ENCODE measurements at regions of chr3 and their contacts with region 1.

Region 1: GRCh38 chr3:46705022-46705530 is 3.9 kb downstream of the TMIE start:
- DNase-seq: peak; percentile 68 to 86
- ATAC-seq: peak; percentile 80 to 87 (median 84)
- H3K4me3 ChIP-seq: no peak overlapping the region
- H3K27ac ChIP-seq: no peak overlapping the region
- H3K4me1 ChIP-seq: peaks cover 35% of the 10 kb centered on the region
- H3K27me3 ChIP-seq: no peaks in the 10 kb centered on the region
- CTCF ChIP-seq: peak; percentile 98

Region 2: GRCh38 chr3:46866720-46867549 is 161.9 kb after region 1 on chr3:
- intact Hi-C with region 1: loop called in 1 of 2 experiments (anchors 10 kb)
- DNase-seq: peak; percentile 86 to 93
- ATAC-seq: peak; percentile 35 to 55 (median 48)
- H3K4me3 ChIP-seq: peak overlapping the region; percentile 9
- H3K27ac ChIP-seq: peak overlapping the region; percentile 59
- H3K4me1 ChIP-seq: peaks cover 18% of the 10 kb centered on the region
- H3K27me3 ChIP-seq: no peaks in the 10 kb centered on the region
- CTCF ChIP-seq: peak; percentile 76

Region 3: DNA sequence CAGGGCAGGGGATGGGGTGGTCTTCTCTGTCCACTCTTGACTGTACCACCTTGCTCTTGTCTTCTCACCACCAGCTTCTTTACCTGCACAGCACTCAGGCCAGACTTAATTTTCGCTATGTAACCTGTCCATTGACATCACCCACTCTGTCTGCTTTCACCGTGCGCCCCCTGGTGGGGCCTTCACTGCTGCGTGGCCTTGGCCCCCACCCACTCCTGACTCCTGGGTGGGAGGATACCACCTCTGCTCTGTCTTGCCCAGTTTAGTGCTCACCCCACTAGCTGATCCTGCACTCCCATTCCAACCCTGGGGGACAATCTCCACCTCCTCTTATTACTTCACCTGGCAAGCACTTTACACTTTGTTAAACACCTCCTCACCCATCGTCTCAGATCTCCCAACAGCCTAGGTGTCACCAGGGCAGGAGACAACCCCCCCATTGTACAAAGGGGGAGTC is 190.2 kb after region 1 on chr3:
- intact Hi-C with region 1: loop called (anchors 2 to 5 kb)
- DNase-seq: peak; percentile 78 to 85
- ATAC-seq: peak; percentile 41 to 57 (median 50)
- H3K4me3 ChIP-seq: no peak overlapping the region
- H3K27ac ChIP-seq: no peak overlapping the region
- H3K4me1 ChIP-seq: no peaks in the 10 kb centered on the region
- H3K27me3 ChIP-seq: peaks cover 0 to 2% (median 0%) of the 10 kb centered on the region in 3 donors
- CTCF ChIP-seq: peak; percentile 80

Region 4: DNA sequence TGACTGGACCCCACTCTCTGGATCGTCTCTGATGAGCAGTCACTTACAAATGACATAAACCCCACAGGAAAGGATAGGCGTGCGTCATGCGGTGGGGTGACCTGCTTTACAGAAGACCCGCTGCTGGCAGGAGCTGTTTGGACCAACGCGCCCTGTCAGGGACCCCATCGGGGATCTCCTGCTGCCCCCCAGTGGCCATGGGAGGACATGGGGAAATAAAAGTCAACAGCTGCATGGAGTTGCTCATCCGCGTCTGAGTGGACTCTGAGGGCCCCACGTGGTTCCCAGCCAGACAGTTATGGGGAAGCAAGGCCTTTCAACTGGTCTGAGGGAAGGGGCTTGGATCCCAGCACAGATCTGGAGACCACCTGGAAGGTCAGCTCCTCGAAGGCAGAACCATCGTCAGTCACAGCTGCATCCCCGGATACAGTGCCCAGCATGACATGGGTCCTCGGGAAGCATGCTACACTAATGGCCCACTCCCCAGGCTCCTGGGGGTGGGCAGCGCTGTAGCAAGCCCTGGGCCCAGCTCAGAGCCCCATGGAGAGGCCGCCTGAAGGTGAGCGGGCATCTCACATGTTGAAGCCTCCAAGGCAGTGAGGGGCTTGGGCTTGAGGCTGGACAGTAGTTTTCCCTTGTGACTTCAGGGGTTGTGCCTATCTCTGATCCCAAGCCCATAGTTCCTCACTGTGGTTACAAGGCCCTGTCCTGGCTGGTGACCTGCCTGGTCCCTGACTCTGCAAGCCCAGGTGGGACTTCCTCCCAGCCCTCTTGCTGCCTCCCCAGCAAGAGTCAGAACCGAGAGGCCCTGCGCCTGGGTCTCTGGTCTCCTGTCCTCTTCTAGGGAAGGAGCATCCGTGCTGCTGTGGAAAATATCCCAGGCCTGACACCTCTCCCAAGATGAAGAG is 204.7 kb after region 1 on chr3:
- intact Hi-C with region 1: loop called (anchors 1 to 5 kb)
- DNase-seq: peak; percentile 89 to 93
- ATAC-seq: peak; percentile 87 to 93 (median 90)
- H3K4me3 ChIP-seq: no peak overlapping the region
- H3K27ac ChIP-seq: no peak overlapping the region
- H3K4me1 ChIP-seq: peaks cover 22% of the 10 kb centered on the region
- H3K27me3 ChIP-seq: no peaks in the 10 kb centered on the region
- CTCF ChIP-seq: peak; percentile 88

Region 5: DNA sequence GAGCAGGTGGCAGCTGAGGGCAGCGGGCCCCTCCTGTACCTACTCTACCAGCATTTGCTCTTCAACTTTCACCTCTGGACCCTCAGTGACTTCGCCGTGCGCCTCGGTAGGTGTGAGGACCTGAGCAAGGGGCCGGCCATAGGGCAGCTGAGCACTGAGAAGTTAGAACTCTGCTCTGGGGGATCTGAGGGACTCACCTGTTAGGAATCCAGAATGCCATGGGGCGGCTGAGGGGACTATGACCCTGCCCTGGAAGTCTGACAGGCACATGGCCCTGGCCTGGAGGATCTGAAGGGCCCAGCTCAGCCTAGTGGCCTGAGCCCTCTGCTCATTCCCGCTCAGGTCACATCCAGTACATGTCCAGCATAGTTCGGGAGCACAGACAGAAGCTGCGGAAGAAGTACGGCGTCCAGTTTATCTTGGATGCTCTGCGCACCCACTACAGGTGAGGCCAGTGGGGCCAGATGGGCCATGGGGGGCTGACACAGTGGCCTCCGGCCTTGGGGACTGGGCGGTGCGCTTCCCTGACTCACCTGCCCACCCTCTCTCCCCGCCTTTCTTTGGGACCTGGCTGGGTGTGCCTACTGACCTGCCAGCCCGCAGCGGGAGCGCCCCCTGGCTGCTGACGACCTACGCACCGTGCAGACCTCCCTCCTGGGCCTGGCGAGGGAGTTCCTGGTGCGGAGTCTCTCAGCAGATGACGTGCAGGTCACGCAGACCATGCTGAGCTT is 293.2 kb after region 1 on chr3:
- intact Hi-C with region 1: loop called (anchors 2 to 10 kb)
- DNase-seq: peak; percentile 77 to 90
- ATAC-seq: peak; percentile 83 to 95 (median 85)
- H3K4me3 ChIP-seq: no peak overlapping the region
- H3K27ac ChIP-seq: no peak overlapping the region
- H3K4me1 ChIP-seq: no peaks in the 10 kb centered on the region
- H3K27me3 ChIP-seq: no peaks in the 10 kb centered on the region
- CTCF ChIP-seq: peak; percentile 78